ENCODE measurements at regions of chr16 and their contacts with region 1.

Region 1: GRCh38 chr16:30010844-30011713 is at the start of gene DOC2A:
- DNase-seq: no peak
- ATAC-seq: peak; percentile 8
- H3K4me3 ChIP-seq: peak within 1 kb of the TSS; percentile 34
- H3K27ac ChIP-seq: no peak within 1 kb of the TSS
- H3K4me1 ChIP-seq: peaks cover 5% of the 10 kb centered on the region
- H3K27me3 ChIP-seq: peaks cover 42% of the 10 kb centered on the region
- CTCF ChIP-seq: no peak
- total RNA-seq, gene DOC2A: 2.6 TPM

Region 2: DNA sequence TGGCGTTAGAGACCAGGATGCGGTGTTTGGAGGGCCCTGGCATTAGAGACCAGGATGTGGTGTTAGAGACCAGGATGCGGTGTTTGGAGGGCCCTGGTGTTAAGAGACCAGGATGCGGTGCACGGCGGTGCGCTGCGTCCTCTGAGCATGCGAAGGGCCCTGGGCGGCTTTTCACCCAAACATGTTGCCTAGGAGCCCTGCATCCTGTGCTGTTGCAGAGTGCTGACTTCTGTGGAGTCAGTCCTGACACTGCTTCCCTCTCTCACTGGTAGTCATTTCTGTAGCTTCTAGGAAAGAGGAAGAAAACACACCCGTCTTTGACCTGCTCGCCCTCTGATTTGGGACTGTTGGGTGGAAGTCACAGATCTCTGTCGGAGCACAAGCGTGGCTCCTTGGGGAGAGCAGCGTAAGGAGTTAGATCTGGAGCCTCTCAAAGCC is 885.0 kb before region 1 on chr16:
- intact Hi-C with region 1: no loop called
- DNase-seq: peak; percentile 67
- ATAC-seq: peak; percentile 83
- H3K4me3 ChIP-seq: no peak overlapping the region
- H3K27ac ChIP-seq: peak overlapping the region; percentile 60
- H3K4me1 ChIP-seq: peaks cover 16% of the 10 kb centered on the region
- H3K27me3 ChIP-seq: no peaks in the 10 kb centered on the region
- CTCF ChIP-seq: no peak

Region 3: GRCh38 chr16:29694384-29695195 is 316.5 kb before region 1 on chr16:
- intact Hi-C with region 1: loop called (anchors 10 kb)
- DNase-seq: no peak
- ATAC-seq: peak; percentile 47
- H3K4me3 ChIP-seq: no peak overlapping the region
- H3K27ac ChIP-seq: peak overlapping the region; percentile 11
- H3K4me1 ChIP-seq: no peaks in the 10 kb centered on the region
- H3K27me3 ChIP-seq: no peaks in the 10 kb centered on the region
- CTCF ChIP-seq: no peak